A673 (cell line): ENCODE measurements at regions of chr2 and their contacts with region 1.

Region 1: DNA sequence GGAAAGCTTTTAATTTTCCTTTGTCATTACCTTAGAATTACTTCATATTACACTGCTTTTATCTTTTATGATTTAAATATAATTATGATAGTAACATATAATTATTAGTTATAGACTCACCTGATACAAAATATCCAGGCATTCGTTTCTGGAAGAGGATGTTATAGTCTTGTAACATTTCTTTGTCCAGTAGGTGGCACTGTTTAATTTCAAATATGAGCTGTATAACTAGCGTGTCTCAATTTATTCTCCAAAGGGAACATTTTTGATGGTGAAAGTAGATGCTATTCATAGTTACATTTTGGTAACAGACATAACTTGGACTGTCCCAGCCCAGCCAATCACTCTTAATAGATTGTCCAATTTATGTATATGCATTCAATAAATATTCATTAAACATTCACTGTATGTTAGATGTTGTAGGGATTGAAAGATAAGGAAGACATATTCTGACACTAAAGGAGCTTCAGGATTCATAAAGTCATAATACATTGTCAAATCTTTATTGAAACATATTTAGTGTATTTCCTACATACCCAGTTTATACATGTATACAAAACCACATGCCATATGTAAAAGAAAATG is 19.2 kb downstream of the DAW1 start:
- DNase-seq: peak; percentile 83
- H3K4me3 ChIP-seq: no peak overlapping the region
- H3K27ac ChIP-seq: peak overlapping the region; percentile 62
- H3K4me1 ChIP-seq: peaks cover 12% of the 10 kb centered on the region
- H3K27me3 ChIP-seq: no peaks in the 10 kb centered on the region
- CTCF ChIP-seq: peak; percentile 68

Region 2: DNA sequence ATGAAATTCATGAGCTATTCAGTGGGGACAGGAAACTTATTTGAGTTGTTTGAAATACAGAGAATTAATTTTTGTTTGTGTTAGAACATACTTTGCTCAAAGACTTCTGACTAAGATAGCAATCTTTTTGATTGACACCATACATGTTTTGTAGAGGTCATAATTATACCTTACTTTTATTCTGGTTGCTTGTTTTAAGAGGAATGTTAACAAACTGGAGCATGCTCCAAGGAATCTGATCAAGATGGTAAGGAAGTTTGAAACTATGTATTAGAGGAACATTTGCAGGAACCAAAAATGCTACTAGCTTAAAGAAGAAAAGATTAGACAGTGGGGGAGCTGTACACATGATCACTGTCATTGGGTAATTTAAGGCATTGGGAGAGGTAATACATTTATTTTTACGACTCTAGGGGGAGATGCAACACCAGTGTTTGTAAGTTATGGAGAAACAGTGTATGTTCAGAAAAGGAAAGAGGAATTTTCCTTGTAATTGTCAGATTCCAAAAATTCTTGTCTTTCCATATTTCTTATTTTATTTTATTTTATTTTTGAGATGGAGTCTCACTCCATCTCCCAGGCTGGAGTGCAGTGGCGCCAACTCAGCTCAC is 410.6 kb before region 1 on chr2:
- CTCF ChIA-PET with region 1: no interaction called
- POLR2A ChIA-PET with region 1: no interaction called
- intact Hi-C with region 1: loop called (anchors 5 kb)
- DNase-seq: peak; percentile 81
- H3K4me3 ChIP-seq: no peak overlapping the region
- H3K27ac ChIP-seq: peak overlapping the region; percentile 12
- H3K4me1 ChIP-seq: peaks cover 43% of the 10 kb centered on the region
- H3K27me3 ChIP-seq: no peaks in the 10 kb centered on the region
- CTCF ChIP-seq: peak; percentile 60